ENCODE measurements at regions of chr20 and their contacts with region 1.

Region 1: DNA sequence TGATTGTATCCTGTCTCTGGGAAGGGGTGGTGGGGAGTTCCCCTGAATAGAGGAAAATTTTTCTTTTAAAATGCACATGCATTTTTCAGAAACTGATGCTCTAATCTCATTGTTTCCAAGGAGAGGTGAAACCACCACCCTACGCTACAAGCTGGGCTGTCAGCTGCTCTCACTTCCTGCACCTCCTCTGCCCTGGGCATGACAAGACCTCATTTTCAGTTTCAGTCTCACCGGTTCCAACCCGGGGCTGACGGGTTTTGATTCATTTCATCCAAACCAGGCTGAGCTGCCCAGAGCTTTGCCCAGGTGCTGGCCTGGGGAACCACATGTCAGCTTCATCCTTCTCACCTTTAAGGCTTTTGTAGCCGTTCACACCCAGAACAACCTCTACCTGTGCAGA is 99.7 kb downstream of the EYA2 start:
- DNase-seq: peak; percentile 74
- H3K4me3 Mint-ChIP-seq: no peak overlapping the region
- H3K27ac Mint-ChIP-seq: peak overlapping the region; percentile 75
- H3K4me1 Mint-ChIP-seq: peaks cover 64% of the 10 kb centered on the region
- H3K27me3 Mint-ChIP-seq: peaks cover 8% of the 10 kb centered on the region

Region 2: DNA sequence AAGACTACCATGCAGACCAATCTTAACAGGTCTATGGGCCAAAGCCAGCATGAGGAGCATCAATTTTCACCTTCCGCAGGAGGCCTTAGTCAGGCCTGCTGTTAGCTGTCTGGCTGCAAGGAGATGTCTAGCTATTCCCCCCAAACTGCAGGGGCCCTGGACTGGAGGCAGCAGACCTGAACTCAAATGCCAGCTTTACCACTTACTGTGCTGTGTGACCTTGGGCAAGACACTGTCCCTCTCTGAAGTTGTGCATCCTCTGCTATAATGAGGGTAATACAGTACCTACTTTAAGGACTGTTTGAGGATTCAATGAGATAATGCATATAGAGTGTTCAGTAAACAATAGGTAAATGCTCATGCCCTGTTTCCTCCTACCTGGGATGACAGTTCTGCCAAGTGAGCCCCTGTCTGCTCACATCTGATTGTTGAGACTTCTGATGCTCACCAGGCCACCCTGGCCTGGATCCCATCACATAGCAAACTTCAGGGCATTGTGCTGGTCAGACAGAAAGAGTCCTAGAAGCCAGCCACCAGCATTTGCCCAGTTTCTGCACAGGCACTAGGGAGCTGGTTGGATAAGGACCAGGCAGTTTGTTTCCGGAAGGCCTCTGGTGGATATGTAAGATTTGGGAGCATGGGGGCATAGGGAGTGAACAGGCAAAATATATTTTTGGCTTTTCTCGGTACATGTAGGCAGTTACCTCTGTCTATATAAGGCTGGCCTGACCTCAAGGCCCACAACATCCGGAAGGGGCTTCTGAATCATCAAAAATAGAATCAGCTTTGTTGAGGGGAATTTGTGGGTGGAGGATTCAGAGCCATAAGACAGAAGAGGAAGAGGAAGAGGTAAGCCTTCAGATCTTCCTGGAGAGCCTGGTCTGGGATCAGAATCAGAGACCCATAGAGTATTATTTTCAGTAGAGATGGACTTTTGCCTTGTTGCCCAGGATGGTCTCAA is 441.6 kb before region 1 on chr20:
- intact Hi-C with region 1: loop called (anchors 2 kb)
- DNase-seq: peak; percentile 48
- H3K4me3 Mint-ChIP-seq: peak overlapping the region; percentile 58
- H3K27ac Mint-ChIP-seq: peak overlapping the region; percentile 90
- H3K4me1 Mint-ChIP-seq: peaks cover 57% of the 10 kb centered on the region
- H3K27me3 Mint-ChIP-seq: no peaks in the 10 kb centered on the region

Region 3: GRCh38 chr20:46757754-46758678 is 236.3 kb before region 1 on chr20:
- intact Hi-C with region 1: loop called (anchors 10 kb)
- DNase-seq: peak; percentile 61
- H3K4me3 Mint-ChIP-seq: no peak overlapping the region
- H3K27ac Mint-ChIP-seq: no peak overlapping the region
- H3K4me1 Mint-ChIP-seq: no peaks in the 10 kb centered on the region
- H3K27me3 Mint-ChIP-seq: peaks cover 1% of the 10 kb centered on the region

Region 4: DNA sequence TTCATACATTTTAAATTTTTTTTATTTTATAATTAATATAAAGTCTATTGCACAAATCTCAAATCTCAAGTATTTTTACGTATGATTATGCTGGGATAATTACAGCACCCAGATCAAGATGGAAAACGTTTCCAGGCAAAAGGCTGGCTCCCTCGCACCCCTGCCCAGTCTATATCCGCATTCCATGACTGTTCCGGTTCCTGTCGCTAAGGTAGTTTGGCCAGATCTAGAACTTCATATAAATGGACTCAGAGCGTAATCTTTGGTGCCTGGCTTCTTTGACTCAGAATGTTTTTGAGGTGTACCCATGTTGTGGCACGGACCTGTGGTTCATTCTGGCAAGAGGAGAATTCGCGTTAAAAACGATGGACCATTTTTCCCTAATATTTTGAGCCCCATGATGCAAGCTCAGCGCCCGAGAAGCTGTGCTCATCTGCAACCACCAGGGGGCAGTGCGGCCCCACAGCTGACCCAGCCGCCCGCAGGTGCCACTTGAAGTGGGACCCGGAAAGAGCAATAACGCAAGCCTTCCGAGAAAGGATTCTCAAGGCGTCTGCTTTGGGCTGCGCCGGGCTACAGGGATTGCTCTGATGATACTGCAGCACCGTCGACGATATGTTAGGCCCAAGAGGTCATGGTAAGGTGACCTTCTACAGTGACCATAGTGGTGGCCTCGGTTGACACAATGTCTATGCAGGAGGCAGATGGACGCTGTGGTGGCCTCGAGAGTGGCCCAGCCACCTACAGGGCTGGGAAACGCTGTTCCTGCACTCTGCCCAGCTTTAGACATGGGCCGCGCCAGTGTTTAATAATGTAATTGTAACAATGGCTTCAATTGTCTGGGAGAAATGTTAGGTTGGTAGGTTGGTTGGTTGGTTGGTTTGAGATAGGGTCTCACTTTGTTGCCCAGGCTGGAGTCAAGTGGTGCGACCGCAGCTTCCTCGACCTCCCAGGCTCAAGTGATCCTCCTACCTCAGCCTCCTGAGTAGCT is 202.0 kb after region 1 on chr20:
- intact Hi-C with region 1: loop called (anchors 5 kb)
- DNase-seq: peak; percentile 69
- H3K4me3 Mint-ChIP-seq: no peak overlapping the region
- H3K27ac Mint-ChIP-seq: no peak overlapping the region
- H3K4me1 Mint-ChIP-seq: peaks cover 18% of the 10 kb centered on the region
- H3K27me3 Mint-ChIP-seq: peaks cover 12% of the 10 kb centered on the region

Region 5: DNA sequence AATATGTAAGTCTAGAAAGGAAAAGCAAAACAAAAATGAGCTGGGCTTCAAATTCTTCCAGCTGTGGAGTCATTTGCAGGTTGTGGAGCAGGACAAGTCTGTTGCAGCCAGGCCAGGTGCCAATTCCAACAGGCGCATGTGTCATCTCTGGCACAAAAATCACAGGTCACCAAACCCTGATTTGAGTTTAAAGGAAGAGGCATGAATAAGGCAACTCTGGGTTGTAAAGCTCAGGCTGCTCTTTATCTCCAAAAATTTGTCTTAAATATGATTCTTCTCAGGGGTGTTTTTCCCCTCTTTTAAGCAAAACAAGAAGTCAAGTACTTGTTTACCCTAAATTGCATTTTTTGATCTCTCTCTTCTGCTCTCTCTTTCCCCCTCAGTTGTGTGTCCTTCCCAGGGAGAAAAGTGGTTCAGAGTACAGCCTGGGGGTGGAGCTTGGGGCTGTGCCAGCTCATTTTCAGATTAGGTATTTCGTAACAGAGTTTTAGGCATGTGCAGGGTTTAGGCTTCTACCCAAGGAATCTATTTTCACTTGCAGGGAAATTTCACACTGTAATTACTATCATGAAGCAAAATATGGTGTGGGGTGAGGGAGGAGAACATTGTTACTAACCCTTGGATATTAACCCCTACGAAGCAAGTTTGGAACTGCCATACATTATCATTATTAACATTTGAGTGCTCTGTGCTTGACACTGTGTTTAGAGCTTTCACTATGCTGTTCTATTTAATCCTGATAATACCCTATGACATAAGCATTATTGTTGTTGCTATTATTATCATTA is 499.0 kb after region 1 on chr20:
- intact Hi-C with region 1: loop called (anchors 10 kb)
- DNase-seq: peak; percentile 51
- H3K4me3 Mint-ChIP-seq: peak overlapping the region; percentile 54
- H3K27ac Mint-ChIP-seq: peak overlapping the region; percentile 79
- H3K4me1 Mint-ChIP-seq: peaks cover 51% of the 10 kb centered on the region
- H3K27me3 Mint-ChIP-seq: no peaks in the 10 kb centered on the region

Measured in activated T-helper 2 cell treated with anti-CD3 and anti-CD28 coated beads, Interferon-gamma antibody, Interleukin-2, Interleukin-4, amounts not matched to agents 10 μg/mL and 5 μg/mL and 100 μg/mL, durations not matched to agents 14 hours and 24 hours and 36 hours (primary cell).